Colonic mucosa (tissue), 4 donors: ENCODE measurements at regions of chr1 and their contacts with region 1.

Region 1: GRCh38 chr1:28779751-28780408 is 32.1 kb upstream of the OPRD1 start:
- DNase-seq: no peak
- H3K4me3 ChIP-seq: no peak overlapping the region
- H3K27ac ChIP-seq: no peak overlapping the region
- H3K4me1 ChIP-seq: no peaks in the 10 kb centered on the region
- H3K27me3 ChIP-seq: no peaks in the 10 kb centered on the region
- CTCF ChIP-seq: no peak

Region 2: DNA sequence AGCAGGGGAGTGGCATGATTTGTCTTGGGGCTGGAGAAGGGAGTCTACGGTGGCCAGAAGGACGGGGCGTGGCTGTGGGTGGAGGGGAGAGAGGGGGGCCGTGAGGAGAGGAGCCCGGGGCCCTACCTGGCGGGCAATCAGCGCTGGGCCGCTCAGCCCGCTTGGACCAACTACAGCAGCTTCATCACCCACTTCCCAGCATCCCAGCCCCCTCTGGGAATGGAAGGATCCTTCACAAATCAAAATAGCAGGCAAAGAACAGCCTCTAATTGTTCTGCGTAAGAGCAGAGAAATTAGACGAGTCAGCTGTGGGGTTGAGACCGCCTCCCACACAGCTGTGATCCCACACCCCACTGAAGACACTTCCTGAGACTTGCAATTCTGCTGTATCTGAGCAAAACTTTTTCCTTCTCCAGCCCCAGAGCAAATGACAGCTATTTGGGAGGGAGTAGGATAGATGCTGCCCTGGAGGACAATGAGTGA is 75.6 kb after region 1 on chr1:
- intact Hi-C with region 1: no loop called
- DNase-seq: no peak
- H3K4me3 ChIP-seq: no peak overlapping the region
- H3K27ac ChIP-seq: no peak overlapping the region
- H3K4me1 ChIP-seq: no peaks in the 10 kb centered on the region
- H3K27me3 ChIP-seq: no peaks in the 10 kb centered on the region
- CTCF ChIP-seq: no peak

Region 3: GRCh38 chr1:29033829-29034466 is 254.1 kb after region 1 on chr1:
- intact Hi-C with region 1: loop called (anchors 10 kb)
- DNase-seq: no peak
- H3K4me3 ChIP-seq: no peak overlapping the region
- H3K27ac ChIP-seq: no peak overlapping the region
- H3K4me1 ChIP-seq: no peaks in the 10 kb centered on the region
- H3K27me3 ChIP-seq: no peaks in the 10 kb centered on the region
- CTCF ChIP-seq: peak; percentile 71